GM10248 (cell line): ENCODE measurements at regions of chr6 and their contacts with region 1.

Region 1: DNA sequence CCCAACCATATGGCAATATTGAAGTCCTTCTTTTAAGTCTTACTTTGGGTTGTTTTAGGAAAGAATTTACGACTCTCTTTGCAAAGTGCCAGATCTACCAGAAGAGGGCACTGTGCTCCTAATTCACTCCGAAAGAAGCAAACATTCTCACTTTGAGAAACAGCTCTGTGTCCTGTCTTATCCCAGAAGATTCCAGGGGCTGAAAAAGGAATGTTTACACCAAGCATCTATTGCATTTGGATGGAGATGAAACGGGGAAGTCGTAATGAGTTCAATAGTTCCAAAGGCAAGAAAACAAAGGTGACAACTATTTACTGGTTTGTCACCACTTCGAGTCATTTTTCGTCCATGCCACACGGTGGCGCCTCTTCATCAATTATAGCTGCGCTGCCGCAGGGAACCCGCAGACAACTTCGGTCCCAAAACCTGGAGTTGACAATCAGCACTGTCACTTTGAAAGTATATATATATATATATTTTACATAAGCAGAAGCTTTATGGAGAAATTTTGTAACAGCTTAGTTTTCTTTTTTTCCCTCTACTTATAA is 121.6 kb downstream of the MOXD1 start:
- DNase-seq: peak; percentile 65
- CTCF ChIP-seq: peak; percentile 77

Region 2: GRCh38 chr6:132165677-132166076 is 114.0 kb before region 1 on chr6:
- CTCF ChIA-PET with region 1: no interaction called
- POLR2A ChIA-PET with region 1: no interaction called
- DNase-seq: no peak
- CTCF ChIP-seq: no peak

Region 3: DNA sequence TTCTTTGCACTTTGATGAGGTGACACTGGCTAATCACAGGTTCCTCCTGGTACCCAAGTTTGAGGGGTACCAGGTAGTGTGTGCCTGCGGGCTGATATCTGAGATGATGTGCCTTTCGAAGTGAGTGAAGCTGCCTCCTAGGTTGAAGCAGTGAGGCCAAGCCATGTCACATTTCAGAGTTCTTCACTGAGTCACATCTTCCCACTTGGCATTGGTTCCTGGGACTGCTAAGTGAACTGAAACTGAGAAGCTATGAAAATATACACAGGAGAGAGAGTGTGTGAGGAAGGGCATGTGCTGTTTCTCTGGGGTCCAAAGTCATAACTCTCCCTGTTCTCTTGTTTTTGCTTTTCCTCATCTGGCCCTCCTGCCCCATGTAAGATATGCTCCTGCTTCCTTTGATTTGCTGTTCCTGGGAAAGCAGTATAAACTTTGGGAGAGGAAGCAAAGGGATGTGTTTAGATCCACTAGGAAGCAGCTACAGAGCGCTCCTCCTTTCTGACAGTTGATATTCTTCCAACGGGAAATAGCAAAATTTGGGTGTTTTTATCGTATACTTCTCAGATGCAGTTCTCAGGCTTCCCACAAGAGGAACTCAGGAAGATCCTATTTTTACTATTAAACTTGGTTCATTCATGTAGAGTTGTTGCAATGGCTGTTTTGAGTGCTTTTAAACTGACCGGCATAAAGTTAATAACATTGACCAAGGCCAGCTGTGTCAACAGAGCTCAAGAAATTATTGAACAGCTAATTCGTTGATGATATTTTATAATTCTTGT is 32.1 kb before region 1 on chr6:
- CTCF ChIA-PET with region 1: interaction called, 13 read pairs
- POLR2A ChIA-PET with region 1: no interaction called
- DNase-seq: no peak
- CTCF ChIP-seq: no peak

Region 4: GRCh38 chr6:132300323-132300949 is 20.8 kb after region 1 on chr6:
- CTCF ChIA-PET with region 1: interaction called, 154 read pairs
- POLR2A ChIA-PET with region 1: no interaction called
- DNase-seq: peak; percentile 18
- CTCF ChIP-seq: peak; percentile 57

Region 5: DNA sequence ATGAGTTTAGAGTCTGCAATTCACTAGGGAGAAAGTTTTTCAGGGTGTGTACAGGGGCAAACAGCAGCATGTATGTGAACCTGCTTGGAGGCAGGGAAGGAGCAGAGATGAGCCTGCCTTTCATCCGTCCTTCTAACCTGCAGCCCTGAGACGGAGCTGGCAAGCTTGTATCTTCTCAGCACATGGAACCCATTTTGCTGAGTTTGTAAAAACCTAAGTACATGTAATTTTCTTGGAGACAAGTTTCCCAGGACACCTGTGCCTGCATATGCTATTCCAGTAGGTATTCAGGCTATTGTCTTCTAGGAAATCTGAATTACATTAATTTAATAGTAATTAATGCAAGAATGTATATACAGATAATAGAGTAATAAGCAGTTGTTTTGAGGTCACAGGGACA is 150.4 kb after region 1 on chr6:
- CTCF ChIA-PET with region 1: interaction called, 15 read pairs
- POLR2A ChIA-PET with region 1: no interaction called
- DNase-seq: no peak
- CTCF ChIP-seq: no peak

Region 6: DNA sequence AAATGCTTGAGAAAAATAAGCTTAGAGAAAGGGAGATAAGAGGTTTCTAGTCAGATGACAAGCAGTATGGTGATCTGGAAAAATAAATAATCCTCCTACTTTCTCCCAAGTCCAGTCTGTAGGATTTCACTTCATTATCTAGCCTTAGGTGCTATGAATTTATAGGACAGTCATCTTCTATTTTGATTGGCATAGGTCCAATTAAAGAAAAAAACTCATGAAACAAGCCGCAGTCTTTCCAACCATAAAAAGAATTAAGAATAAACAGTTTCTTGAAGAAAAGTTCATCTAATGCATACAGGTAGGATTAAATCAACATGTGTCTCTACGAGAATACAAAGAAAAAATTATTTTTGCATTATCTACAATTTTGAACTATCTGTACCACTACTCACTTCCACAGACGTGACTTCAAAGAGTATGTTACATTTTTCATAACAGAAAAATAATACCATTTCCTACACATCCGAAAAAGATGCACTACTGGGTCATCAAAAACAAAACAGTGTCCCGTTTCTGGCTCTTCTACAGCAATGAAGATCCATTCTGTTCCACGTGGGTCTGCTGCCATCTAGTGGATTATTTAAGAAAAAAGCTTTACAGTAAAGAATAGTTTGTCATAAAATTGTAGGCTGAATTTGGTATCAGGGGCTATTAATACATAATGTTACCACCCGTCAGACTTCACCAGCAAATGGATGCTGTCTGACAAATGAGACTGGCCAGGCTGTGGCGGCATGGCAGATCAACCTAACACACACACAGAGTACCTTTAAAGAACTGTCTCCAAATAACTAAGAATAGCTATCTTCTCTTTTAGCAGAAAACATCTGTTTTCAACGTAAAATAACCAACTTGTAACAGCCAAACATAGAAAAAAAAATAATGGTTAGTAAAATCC is 204.4 kb after region 1 on chr6:
- CTCF ChIA-PET with region 1: interaction called, 285 read pairs
- POLR2A ChIA-PET with region 1: interaction called, 4 read pairs
- DNase-seq: peak; percentile 33
- CTCF ChIP-seq: peak; percentile 50

Region 7: GRCh38 chr6:132530293-132530974 is 250.8 kb after region 1 on chr6:
- CTCF ChIA-PET with region 1: interaction called, 13 read pairs
- POLR2A ChIA-PET with region 1: no interaction called
- DNase-seq: peak; percentile 34
- CTCF ChIP-seq: peak; percentile 61